Activated T-helper 2 cell treated with anti-CD3 and anti-CD28 coated beads, Interferon-gamma antibody, Interleukin-2, Interleukin-4, amounts not matched to agents 10 μg/mL and 5 μg/mL and 100 μg/mL, durations not matched to agents 14 hours and 24 hours and 36 hours (primary cell): ENCODE measurements at regions of chr11 and their contacts with region 1.

Region 1: DNA sequence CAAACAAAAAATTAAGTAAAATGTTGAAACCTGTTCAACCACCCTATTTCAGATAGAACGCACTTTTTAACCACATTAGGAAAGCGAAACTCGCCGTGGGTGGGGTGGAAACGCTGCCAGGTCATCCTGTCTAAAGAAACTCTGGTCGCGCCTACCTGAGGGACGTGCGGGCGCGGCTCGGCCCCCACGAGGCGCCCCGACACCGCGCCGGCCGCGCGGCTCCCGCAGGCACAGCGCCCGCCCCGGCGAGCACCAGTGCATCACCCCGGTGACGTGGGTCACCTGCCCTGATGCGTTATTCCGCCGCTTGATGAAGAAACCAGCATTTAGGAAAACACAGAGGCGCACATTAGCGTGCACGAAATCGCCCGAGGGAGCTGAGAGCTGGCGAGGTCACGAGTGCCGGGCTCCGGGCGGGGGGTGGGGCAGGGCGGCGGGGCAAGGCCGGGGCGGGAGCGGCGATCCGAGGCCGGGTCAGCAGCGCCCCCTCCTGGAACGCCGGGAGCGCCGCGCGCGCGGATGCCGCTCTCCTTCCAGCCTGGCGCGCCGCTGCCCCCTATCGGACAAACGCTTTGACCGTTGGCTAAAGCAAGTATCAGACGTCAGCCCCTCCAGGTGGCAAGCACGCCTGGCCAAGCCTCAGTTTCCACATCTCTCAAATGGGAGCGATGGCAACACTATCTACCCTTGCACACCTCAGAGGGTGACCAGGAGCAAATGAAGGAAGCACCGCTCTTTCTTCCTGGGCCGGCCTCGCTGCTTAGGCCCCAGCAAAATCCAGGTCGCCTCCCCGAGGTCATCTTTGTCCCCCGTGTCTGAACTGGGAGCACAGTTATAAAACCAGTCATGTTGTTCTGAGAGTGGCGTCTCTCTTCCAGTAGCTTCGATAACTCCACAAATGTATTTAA is 15.7 kb upstream of the SNX32 start:
- DNase-seq: peak; percentile 87
- H3K4me3 Mint-ChIP-seq: peak overlapping the region; percentile 79
- H3K27ac Mint-ChIP-seq: peak overlapping the region; percentile 65
- H3K4me1 Mint-ChIP-seq: peaks cover 18% of the 10 kb centered on the region
- H3K27me3 Mint-ChIP-seq: no peaks in the 10 kb centered on the region

Region 2: GRCh38 chr11:65711785-65712632 is 106.1 kb before region 1 on chr11 and contains the start of gene KAT5:
- intact Hi-C with region 1: loop called (anchors 1 kb)
- DNase-seq: peak; percentile 99
- H3K4me3 Mint-ChIP-seq: peak within 1 kb of the TSS; percentile 89
- H3K27ac Mint-ChIP-seq: peak within 1 kb of the TSS; percentile 91
- H3K4me1 Mint-ChIP-seq: peaks cover 25% of the 10 kb centered on the region
- H3K27me3 Mint-ChIP-seq: no peaks in the 10 kb centered on the region
- total RNA-seq, gene KAT5: 76.3 and 79.4 TPM in 2 replicates

Region 3: GRCh38 chr11:65766535-65766934 is 51.6 kb before region 1 on chr11:
- intact Hi-C with region 1: loop called (anchors 10 kb)
- DNase-seq: no peak
- H3K4me3 Mint-ChIP-seq: no peak overlapping the region
- H3K27ac Mint-ChIP-seq: no peak overlapping the region
- H3K4me1 Mint-ChIP-seq: peaks cover 8% of the 10 kb centered on the region
- H3K27me3 Mint-ChIP-seq: peaks cover under 1% of the 10 kb centered on the region

Region 4: DNA sequence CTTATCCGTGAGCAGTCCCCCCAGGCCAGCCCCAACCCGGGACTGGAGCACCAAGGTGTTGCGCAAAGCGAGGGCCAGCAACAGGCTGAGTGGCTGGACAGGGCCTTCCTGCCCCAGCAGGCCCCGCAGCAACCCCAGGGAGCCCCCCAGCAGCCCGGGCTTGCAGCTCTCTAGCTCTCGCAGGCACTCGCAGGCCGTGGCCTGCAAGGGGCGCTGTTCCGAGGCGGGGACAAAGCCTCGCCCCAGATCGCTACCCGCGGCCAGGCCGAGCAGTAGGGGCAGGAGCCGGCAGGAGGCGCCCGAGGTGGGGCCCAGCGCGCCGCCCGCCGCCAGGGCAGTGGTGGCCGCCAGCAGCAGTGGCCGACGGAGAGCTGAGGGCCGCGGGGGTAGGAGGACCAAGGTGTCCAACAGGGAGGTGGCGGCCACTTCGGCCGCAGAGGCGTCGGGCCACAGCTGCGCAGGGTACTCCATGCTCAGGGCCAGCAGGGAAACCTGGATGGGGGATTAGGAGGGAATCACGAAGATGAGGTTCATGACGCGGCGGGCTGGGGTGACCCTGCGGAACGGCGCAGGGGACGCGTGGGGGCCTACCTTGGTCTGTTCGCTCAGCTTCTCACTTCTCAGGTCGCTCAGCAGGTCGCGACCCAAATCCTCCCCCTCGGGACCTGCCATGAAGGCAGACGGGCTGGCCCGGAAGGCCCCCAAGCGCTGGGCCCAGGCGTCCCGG is 38.1 kb before region 1 on chr11:
- intact Hi-C with region 1: loop called (anchors 1 kb)
- DNase-seq: peak; percentile 83
- H3K4me3 Mint-ChIP-seq: peak overlapping the region; percentile 89
- H3K27ac Mint-ChIP-seq: peak overlapping the region; percentile 91
- H3K4me1 Mint-ChIP-seq: peaks cover 25% of the 10 kb centered on the region
- H3K27me3 Mint-ChIP-seq: peaks cover 8% of the 10 kb centered on the region

Region 5: GRCh38 chr11:65859200-65859811 is 41.2 kb after region 1 on chr11:
- intact Hi-C with region 1: no loop called
- DNase-seq: peak; percentile 98
- H3K4me3 Mint-ChIP-seq: peak overlapping the region; percentile 94
- H3K27ac Mint-ChIP-seq: peak overlapping the region; percentile 97
- H3K4me1 Mint-ChIP-seq: peaks cover 34% of the 10 kb centered on the region
- H3K27me3 Mint-ChIP-seq: no peaks in the 10 kb centered on the region

Region 6: GRCh38 chr11:65888163-65888814 is 70.2 kb after region 1 on chr11 and contains the start of gene FIBP:
- intact Hi-C with region 1: no loop called
- DNase-seq: peak; percentile 91
- H3K4me3 Mint-ChIP-seq: peak within 1 kb of the TSS; percentile 98
- H3K27ac Mint-ChIP-seq: peak within 1 kb of the TSS; percentile 92
- H3K4me1 Mint-ChIP-seq: peaks cover 47% of the 10 kb centered on the region
- H3K27me3 Mint-ChIP-seq: no peaks in the 10 kb centered on the region
- total RNA-seq, gene FIBP: 95.4 and 99.8 TPM in 2 replicates

Region 7: DNA sequence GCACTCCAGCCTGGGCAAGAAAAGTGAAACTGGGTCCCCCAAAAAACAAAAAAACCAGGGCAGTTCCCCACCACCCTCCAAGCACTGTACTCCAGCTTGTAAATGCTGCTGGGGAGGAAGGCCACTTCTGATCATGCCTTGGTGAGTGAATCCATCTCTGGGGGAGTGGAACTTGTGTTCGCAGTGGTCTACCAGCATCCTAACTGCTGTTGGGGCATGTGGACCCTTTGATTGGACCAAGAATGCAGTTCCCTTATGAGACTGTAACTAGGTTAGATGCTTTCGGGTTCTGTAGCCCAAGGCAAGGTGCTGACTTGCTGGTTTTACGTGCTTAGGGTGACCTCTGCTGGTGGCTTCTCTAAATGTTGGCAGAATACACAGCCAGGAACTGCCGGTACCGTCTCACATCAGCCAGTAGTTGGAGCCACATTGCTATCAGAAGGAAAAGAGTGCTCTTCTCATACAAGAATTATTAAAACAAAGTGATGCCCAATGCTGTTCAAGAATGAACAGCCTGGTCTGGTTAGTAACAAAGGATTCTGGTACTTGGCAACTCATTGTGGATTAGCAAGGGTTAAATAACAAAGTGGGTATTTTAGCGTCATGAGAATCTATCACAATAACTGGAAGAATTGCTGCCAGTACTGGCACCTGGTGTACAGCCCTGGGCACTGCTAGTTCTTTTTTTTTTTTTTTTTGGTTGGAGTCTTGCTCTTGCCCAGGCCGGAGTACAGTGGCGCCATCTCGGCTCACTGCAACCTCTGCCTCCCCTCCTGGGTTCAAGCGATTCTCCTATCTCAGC is 170.9 kb after region 1 on chr11:
- intact Hi-C with region 1: loop called (anchors 1 kb)
- DNase-seq: peak; percentile 89
- H3K4me3 Mint-ChIP-seq: no peak overlapping the region
- H3K27ac Mint-ChIP-seq: peak overlapping the region; percentile 85
- H3K4me1 Mint-ChIP-seq: peaks cover 5% of the 10 kb centered on the region
- H3K27me3 Mint-ChIP-seq: no peaks in the 10 kb centered on the region